CD8-positive, alpha-beta memory T cell (primary cell): ENCODE measurements at regions of chr14 and their contacts with region 1.

Region 1: GRCh38 chr14:51283402-51284085 is 43.5 kb downstream of the TMX1 start:
- DNase-seq: peak in 2 of 5 donors; percentile 15 to 25
- H3K4me3 ChIP-seq: no peak overlapping the region
- H3K4me3 Mint-ChIP-seq: no peak overlapping the region
- H3K27ac ChIP-seq: no peak overlapping the region
- H3K27ac Mint-ChIP-seq: no peak overlapping the region
- H3K4me1 ChIP-seq: no peaks in the 10 kb centered on the region
- H3K4me1 Mint-ChIP-seq: no peaks in the 10 kb centered on the region
- H3K27me3 ChIP-seq: no peaks in the 10 kb centered on the region
- H3K27me3 Mint-ChIP-seq: no peaks in the 10 kb centered on the region

Region 2: DNA sequence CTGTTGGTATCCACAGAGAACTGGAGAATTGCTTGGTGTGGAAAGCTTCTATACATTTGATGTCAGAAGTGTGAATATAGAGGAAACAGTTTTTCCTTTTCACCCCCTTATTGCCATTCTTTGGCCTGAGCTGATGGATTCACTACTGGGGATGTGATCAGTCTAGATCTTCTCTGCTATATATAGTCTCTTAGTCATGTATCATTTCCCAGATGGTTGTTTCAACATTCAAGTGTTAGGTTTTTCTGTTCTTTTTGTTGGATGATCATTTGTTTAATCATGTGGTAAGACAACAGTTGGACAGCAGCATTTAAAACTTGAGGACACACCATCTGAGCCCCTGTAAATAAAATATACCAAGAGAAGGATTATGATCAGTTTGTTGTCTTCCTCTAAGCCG is 13.9 kb before region 1 on chr14:
- CTCF ChIA-PET with region 1: interaction called, 11 read pairs
- POLR2A ChIA-PET with region 1: interaction called, 3 read pairs
- DNase-seq: no peak
- H3K4me3 ChIP-seq: no peak overlapping the region
- H3K4me3 Mint-ChIP-seq: no peak overlapping the region
- H3K27ac ChIP-seq: no peak overlapping the region
- H3K27ac Mint-ChIP-seq: no peak overlapping the region
- H3K4me1 ChIP-seq: no peaks in the 10 kb centered on the region
- H3K4me1 Mint-ChIP-seq: no peaks in the 10 kb centered on the region
- H3K27me3 ChIP-seq: no peaks in the 10 kb centered on the region
- H3K27me3 Mint-ChIP-seq: no peaks in the 10 kb centered on the region

Region 3: GRCh38 chr14:51395361-51395849 is 111.9 kb after region 1 on chr14:
- CTCF ChIA-PET with region 1: no interaction called
- POLR2A ChIA-PET with region 1: no interaction called
- DNase-seq: no peak
- H3K4me3 ChIP-seq: no peak overlapping the region
- H3K4me3 Mint-ChIP-seq: no peak overlapping the region
- H3K27ac ChIP-seq: no peak overlapping the region
- H3K27ac Mint-ChIP-seq: no peak overlapping the region
- H3K4me1 ChIP-seq: no peaks in the 10 kb centered on the region
- H3K4me1 Mint-ChIP-seq: no peaks in the 10 kb centered on the region
- H3K27me3 ChIP-seq: no peaks in the 10 kb centered on the region
- H3K27me3 Mint-ChIP-seq: peaks cover 4 to 25% of the 10 kb centered on the region in 2 donors

Region 4: GRCh38 chr14:51780006-51780692 is 496.6 kb after region 1 on chr14:
- CTCF ChIA-PET with region 1: interaction called, 39 read pairs
- POLR2A ChIA-PET with region 1: no interaction called
- DNase-seq: peak; percentile 53 to 80 (median 59)
- H3K4me3 ChIP-seq: no peak overlapping the region
- H3K4me3 Mint-ChIP-seq: peak overlapping the region in 4 of 7 donors; percentile 25 to 42 (median 28)
- H3K27ac ChIP-seq: no peak overlapping the region
- H3K27ac Mint-ChIP-seq: peak overlapping the region in 1 of 8 donors; percentile 12
- H3K4me1 ChIP-seq: peaks cover 10% of the 10 kb centered on the region
- H3K4me1 Mint-ChIP-seq: peaks cover 11 to 16% (median 15%) of the 10 kb centered on the region in 3 donors
- H3K27me3 ChIP-seq: no peaks in the 10 kb centered on the region
- H3K27me3 Mint-ChIP-seq: peaks cover 18 to 51% of the 10 kb centered on the region in 2 donors